ENCODE measurements at regions of chr12 and their contacts with region 1.

Region 1: GRCh38 chr12:59834659-59835474 is 239.0 kb downstream of the SLC16A7 start:
- DNase-seq: no peak
- H3K4me3 ChIP-seq: no peak overlapping the region
- H3K27ac ChIP-seq: no peak overlapping the region
- H3K4me1 ChIP-seq: no peaks in the 10 kb centered on the region
- H3K27me3 ChIP-seq: no peaks in the 10 kb centered on the region
- CTCF ChIP-seq: peak; percentile 55

Region 2: GRCh38 chr12:59230334-59230733 is 604.5 kb before region 1 on chr12:
- intact Hi-C with region 1: no loop called
- DNase-seq: no peak
- H3K4me3 ChIP-seq: no peak overlapping the region
- H3K27ac ChIP-seq: no peak overlapping the region
- H3K4me1 ChIP-seq: no peaks in the 10 kb centered on the region
- H3K27me3 ChIP-seq: no peaks in the 10 kb centered on the region
- CTCF ChIP-seq: no peak

Region 3: GRCh38 chr12:59403259-59403932 is 431.5 kb before region 1 on chr12:
- intact Hi-C with region 1: loop called (anchors 10 kb)
- DNase-seq: peak; percentile 46
- H3K4me3 ChIP-seq: no peak overlapping the region
- H3K27ac ChIP-seq: no peak overlapping the region
- H3K4me1 ChIP-seq: no peaks in the 10 kb centered on the region
- H3K27me3 ChIP-seq: no peaks in the 10 kb centered on the region
- CTCF ChIP-seq: peak; percentile 73

Measured in colonic mucosa (tissue), 4 donors.